ENCODE measurements at regions of chr21 and their contacts with region 1.

Region 1: DNA sequence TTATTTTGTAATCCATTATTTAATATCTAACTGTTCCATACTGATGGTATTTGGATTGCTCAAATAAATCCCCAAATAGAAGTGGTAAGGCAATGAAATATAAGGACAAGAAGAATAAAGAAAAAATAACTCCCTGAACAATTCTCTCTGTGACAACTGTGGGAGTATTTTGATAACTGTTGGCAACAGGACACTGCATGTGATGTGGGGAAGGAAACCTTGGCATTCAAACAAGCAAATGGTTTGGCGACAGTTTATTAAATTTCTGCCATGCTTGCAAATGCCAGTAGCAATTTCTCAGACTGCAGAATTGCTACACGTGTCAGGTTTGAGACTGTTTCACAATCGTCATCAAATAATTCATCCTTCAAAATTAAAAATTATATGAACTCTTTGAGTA is 8.6 kb upstream of the MRPL39 start:
- DNase-seq: no peak
- ATAC-seq: peak in 4 of 8 donors; percentile 54 to 69 (median 60)
- H3K4me3 ChIP-seq: no peak overlapping the region
- H3K27ac ChIP-seq: peak overlapping the region in 3 of 10 donors; percentile 34 to 64 (median 55)
- H3K4me1 ChIP-seq: peaks cover 0 to 15% (median 0%) of the 10 kb centered on the region in 9 donors
- H3K27me3 ChIP-seq: no peaks in the 10 kb centered on the region
- CTCF ChIP-seq: no peak

Region 2: DNA sequence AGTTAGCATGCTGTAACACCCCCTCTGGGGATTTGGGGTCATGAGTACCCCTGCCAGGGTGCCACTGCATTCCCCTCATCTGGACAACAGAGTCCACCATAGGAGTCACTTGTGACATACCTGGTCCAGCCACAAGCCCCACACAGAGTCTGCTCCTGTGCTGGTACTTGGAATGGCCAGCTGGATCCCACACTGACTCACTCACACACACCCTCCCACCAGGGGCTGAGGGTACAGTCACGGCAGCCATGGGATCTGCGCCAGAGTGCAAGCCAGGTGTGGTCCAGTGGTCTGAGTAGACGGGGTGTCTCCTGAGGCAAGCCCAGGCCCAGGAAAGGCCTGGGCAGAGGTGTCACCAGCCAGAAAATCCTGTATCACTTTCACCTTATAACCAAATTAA is 76.3 kb before region 1 on chr21:
- intact Hi-C with region 1: no loop called
- DNase-seq: no peak
- ATAC-seq: no peak
- H3K4me3 ChIP-seq: no peak overlapping the region
- H3K27ac ChIP-seq: no peak overlapping the region
- H3K4me1 ChIP-seq: no peaks in the 10 kb centered on the region
- H3K27me3 ChIP-seq: no peaks in the 10 kb centered on the region
- CTCF ChIP-seq: no peak

Region 3: GRCh38 chr21:25862596-25862995 is 246.7 kb after region 1 on chr21:
- intact Hi-C with region 1: loop called in 1 of 10 experiments (anchors 10 kb)
- DNase-seq: no peak
- ATAC-seq: no peak
- H3K4me3 ChIP-seq: no peak overlapping the region
- H3K27ac ChIP-seq: no peak overlapping the region
- H3K4me1 ChIP-seq: peaks cover 0 to 4% (median 0%) of the 10 kb centered on the region in 9 donors
- H3K27me3 ChIP-seq: no peaks in the 10 kb centered on the region
- CTCF ChIP-seq: peak in 7 of 9 donors; percentile 43 to 66 (median 45)

Region 4: GRCh38 chr21:26194811-26195251 is 579.0 kb after region 1 on chr21:
- intact Hi-C with region 1: no loop called
- DNase-seq: no peak
- ATAC-seq: no peak
- H3K4me3 ChIP-seq: no peak overlapping the region
- H3K27ac ChIP-seq: no peak overlapping the region
- H3K4me1 ChIP-seq: no peaks in the 10 kb centered on the region
- H3K27me3 ChIP-seq: no peaks in the 10 kb centered on the region
- CTCF ChIP-seq: no peak